ENCODE measurements at regions of chr19 and their contacts with region 1.

Region 1: DNA sequence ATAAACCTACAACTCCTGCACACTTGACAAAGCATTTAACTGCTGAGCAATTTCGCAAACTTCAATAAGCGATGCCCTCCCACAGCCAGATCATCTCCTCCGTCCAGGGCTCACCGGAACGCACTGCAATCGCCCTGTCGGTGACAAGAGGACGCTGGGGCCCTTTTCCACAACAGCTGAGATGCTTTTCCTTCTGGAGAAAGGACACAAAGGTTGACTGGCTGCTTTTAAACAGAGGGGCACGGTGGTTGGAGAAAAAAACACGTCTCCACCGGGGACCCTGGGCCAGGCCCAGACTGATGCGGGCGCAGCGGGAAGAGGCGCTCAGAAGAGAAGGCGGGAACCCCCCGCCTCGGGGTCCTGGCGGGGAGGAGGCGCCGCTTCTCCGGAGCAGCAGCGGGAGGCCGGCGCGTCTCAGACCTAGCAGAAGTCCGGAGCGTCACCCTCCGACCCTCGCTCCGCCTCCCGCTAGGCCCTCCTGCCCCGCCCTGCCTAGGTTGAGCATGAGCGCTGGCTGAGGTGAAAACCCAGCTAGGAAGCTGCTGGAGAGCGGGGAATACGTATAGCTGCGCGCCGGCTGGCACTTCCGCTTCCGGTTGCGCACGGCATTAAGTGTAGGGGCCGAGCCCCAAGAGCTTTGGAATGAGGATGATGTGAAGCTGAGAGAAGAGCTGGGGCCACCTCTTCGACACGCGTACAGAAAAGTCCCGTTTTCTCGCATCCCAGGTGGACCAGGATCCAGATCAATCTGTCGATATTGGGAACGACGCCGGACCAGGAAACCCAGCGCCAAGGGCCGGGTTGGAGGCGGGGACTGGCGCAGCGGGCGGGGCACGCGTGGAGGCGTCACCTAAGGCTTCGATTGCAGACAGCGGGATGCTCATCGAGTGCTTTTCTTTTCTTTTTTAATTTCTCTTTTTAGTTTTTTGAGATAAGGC is at the start of gene ZNF846:
- DNase-seq: peak; percentile 96
- ATAC-seq: peak; percentile 99
- H3K4me3 ChIP-seq: peak within 1 kb of the TSS; percentile 33
- H3K4me1 ChIP-seq: peaks cover 14% of the 10 kb centered on the region
- CTCF ChIP-seq: no peak
- total RNA-seq, gene ZNF846: 13.4 to 22.1 (median 20.2) TPM

Region 2: GRCh38 chr19:9785367-9786331 is 17.2 kb after region 1 on chr19:
- intact Hi-C with region 1: loop called in 1 of 2 experiments (anchors 2 kb)
- DNase-seq: peak; percentile 98 to 99 (median 99)
- ATAC-seq: peak; percentile 92
- H3K4me3 ChIP-seq: peak overlapping the region; percentile 36
- H3K4me1 ChIP-seq: peaks cover 13% of the 10 kb centered on the region
- CTCF ChIP-seq: no peak

Region 3: GRCh38 chr19:9885077-9885552 is 116.7 kb after region 1 on chr19:
- intact Hi-C with region 1: no loop called
- DNase-seq: peak in 1 of 3 donors; percentile 2
- ATAC-seq: no peak
- H3K4me3 ChIP-seq: no peak overlapping the region
- H3K4me1 ChIP-seq: no peaks in the 10 kb centered on the region
- CTCF ChIP-seq: no peak

Measured in mucosa of descending colon (tissue), 3 donors.